GM12878 (cell line): ENCODE measurements at regions of chr10 and their contacts with region 1.

Region 1: DNA sequence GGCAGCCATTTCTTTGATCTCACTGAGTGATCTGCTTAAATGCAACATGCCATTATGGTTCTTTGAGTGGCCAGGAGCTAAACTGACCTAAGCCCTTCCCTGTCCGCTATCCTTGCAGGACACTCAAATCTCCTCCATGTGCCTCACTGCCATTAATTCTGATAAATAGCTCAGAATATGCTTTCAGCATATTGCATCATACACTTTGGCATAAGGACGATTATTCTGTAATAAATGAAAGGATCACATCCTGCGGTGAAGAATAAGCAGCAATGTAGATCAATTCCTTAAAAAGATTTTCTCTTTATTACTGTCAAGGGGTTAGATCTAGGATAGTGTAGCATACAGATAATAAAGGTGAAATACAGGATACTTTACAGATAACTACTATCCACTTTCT is 231.8 kb upstream of the CTBP2 start:
- DNase-seq: no peak
- ATAC-seq: no peak
- H3K4me3 ChIP-seq: no peak overlapping the region
- H3K27ac ChIP-seq: no peak overlapping the region
- H3K4me1 ChIP-seq: no peaks in the 10 kb centered on the region
- H3K27me3 ChIP-seq: no peaks in the 10 kb centered on the region
- CTCF ChIP-seq: no peak
- EP300 ChIP-seq: no peak
- POLR2A ChIP-seq: no peak
- RAD21 ChIP-seq: no peak

Region 2: DNA sequence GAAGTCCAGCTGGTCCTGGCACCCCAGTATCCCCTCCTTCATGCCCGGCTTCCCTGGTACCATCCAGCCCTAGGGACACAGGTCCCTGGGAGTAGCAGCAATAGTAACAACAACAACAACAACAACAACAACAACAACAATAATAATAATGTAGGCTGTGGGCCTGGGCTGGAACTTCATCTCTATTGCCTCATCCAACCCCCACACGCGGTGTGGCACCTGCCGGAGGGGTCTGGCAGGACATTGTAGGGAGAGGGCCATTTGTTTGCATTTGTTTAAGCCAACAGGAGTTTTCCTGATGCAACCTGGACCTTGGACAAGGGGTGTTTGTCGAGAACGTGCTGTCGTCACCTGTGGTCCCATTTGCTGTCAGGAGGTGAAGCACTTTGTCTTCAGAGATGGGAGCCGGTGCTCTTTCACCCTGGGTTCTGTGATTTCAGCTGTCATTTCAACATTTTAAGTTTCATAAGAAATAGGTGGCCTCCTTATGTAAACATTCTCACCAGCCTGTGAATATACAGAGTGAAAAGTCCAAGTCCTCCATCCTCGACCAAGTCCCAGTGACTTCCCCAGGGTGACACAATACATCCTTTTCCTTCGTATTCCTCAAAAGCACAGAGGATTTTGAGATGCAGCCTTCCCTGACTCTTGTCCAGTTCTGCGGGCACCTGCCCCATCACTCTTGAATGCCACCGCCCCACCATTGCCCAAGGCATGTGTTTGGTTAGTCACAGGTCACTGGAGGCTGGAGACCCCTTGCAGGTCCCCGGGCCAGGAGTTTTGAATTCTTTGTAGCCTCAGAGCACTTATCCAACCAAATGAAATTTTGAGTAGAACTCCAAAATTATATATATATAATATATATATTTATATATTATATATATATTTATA is 921.4 kb before region 1 on chr10:
- CTCF ChIA-PET with region 1: no interaction called
- POLR2A ChIA-PET with region 1: interaction called, 10 read pairs
- RAD21 ChIA-PET with region 1: no interaction called
- SMC1A ChIA-PET with region 1: no interaction called
- in situ Hi-C with region 1: no loop called
- intact Hi-C with region 1: no loop called
- DNase-seq: no peak
- ATAC-seq: no peak
- H3K4me3 ChIP-seq: no peak overlapping the region
- H3K27ac ChIP-seq: no peak overlapping the region
- H3K4me1 ChIP-seq: peaks cover 2% of the 10 kb centered on the region
- H3K27me3 ChIP-seq: no peaks in the 10 kb centered on the region
- CTCF ChIP-seq: no peak
- EP300 ChIP-seq: no peak
- POLR2A ChIP-seq: no peak
- RAD21 ChIP-seq: no peak

Region 3: DNA sequence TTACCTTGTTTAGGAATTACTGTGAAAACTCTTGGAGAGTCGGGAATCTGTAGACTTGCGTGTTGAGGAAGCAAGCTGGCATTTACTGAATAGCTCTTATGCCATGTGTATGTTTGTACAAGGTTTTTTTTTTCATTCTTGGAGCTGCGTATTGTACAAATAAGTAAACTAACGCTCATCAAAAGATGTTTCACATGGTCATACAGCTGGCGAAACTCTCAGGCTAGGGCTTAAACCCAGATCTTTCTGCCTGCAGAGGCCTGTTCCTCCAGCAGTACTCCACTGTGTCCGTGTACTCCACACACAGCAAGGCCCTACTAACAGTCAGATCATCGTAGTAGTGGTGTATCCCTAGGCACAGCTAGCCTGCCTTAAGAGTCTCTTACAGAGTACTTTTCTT is 334.8 kb after region 1 on chr10:
- CTCF ChIA-PET with region 1: no interaction called
- POLR2A ChIA-PET with region 1: no interaction called
- RAD21 ChIA-PET with region 1: no interaction called
- SMC1A ChIA-PET with region 1: no interaction called
- in situ Hi-C with region 1: no loop called
- intact Hi-C with region 1: no loop called
- DNase-seq: no peak
- ATAC-seq: no peak
- H3K4me3 ChIP-seq: no peak overlapping the region
- H3K27ac ChIP-seq: no peak overlapping the region
- H3K4me1 ChIP-seq: 0 out of 2 replicates have a peak, but pooled peaks cover under 1% of the 10 kb centered on the region
- H3K27me3 ChIP-seq: no peaks in the 10 kb centered on the region
- CTCF ChIP-seq: no peak
- EP300 ChIP-seq: no peak
- POLR2A ChIP-seq: no peak
- RAD21 ChIP-seq: no peak